ENCODE measurements at regions of chr19 and their contacts with region 1.

Region 1: DNA sequence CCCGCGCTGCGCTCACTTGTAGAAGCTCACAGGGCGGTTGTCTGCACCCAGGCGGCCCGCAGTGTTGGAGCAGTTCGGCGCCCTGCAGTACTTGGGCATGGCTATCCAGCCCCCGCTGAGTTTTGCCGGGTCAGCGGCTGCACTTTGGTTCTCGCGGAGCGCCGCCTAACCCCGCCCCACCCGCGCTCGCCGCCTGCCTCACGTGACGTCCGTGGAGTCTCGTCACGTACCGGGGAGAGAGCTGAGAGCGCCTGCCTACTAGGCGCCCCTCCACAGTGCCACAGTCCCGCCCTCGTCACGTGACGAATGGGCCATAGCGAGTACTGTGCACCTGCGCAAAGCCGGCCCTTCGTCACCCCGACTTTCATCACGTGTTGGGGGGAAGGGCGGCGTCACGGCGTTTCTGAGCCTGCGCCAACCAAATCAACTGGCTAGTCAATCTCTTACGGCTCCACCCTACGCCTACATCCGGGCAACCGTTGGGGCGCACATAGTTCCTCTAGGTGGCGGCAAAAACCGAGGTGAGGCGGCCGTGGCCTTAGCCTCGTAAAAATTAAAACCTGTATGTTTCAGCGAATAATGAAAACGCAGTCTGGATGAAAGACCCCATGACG is at the start of gene THAP8:
- DNase-seq: peak; percentile 94 to 99 (median 97)
- ATAC-seq: peak; percentile 90
- H3K4me3 ChIP-seq: peak within 1 kb of the TSS; percentile 55
- H3K27ac ChIP-seq: peak within 1 kb of the TSS; percentile 92
- H3K4me1 ChIP-seq: peaks cover 5 to 26% of the 10 kb centered on the region in 2 experiments; a peak in 3 of 5 replicates
- H3K27me3 ChIP-seq: no peaks in the 10 kb centered on the region
- CTCF ChIP-seq: peak; percentile 34 to 61 (median 61); a peak in 5 of 6 replicates
- EP300 ChIP-seq: peak; percentile 7; the same call in 1 of the 2 replicates
- POLR2A ChIP-seq: peak; percentile 79
- RAD21 ChIP-seq: no peak
- polyA plus RNA-seq, gene THAP8: 0.11 to 0.14 TPM

Region 2: GRCh38 chr19:35995048-35995993 is 58.9 kb before region 1 on chr19 and contains the start of gene SDHAF1:
- CTCF ChIA-PET with region 1: interaction called, 3 read pairs
- POLR2A ChIA-PET with region 1: interaction called, 3 read pairs
- in situ Hi-C with region 1: no loop called
- intact Hi-C with region 1: loop called (anchors 5 kb)
- DNase-seq: peak; percentile 95 to 98 (median 96)
- ATAC-seq: peak; percentile 93
- H3K4me3 ChIP-seq: peak within 1 kb of the TSS; percentile 59
- H3K27ac ChIP-seq: peak within 1 kb of the TSS; percentile 73
- H3K4me1 ChIP-seq: peaks cover 9 to 29% of the 10 kb centered on the region in 2 experiments; a peak in 4 of 5 replicates
- H3K27me3 ChIP-seq: no peaks in the 10 kb centered on the region
- CTCF ChIP-seq: peak in 2 of 3 experiments; percentile 3 to 14; a peak in 1 of 6 replicates
- EP300 ChIP-seq: no peak
- POLR2A ChIP-seq: peak; percentile 88
- RAD21 ChIP-seq: no peak
- polyA plus RNA-seq, gene SDHAF1: 0.42 to 1.1 TPM

Region 3: GRCh38 chr19:36014029-36014924 is 39.9 kb before region 1 on chr19 and contains the start of gene ALKBH6:
- CTCF ChIA-PET with region 1: no interaction called
- POLR2A ChIA-PET with region 1: interaction called, 5 read pairs
- in situ Hi-C with region 1: no loop called
- intact Hi-C with region 1: loop called (anchors 1 kb)
- DNase-seq: peak; percentile 98 to 100 (median 98)
- ATAC-seq: peak; percentile 99
- H3K4me3 ChIP-seq: peak within 1 kb of the TSS; percentile 87
- H3K27ac ChIP-seq: peak within 1 kb of the TSS; percentile 82
- H3K4me1 ChIP-seq: peaks cover 11 to 26% of the 10 kb centered on the region in 2 experiments; a peak in 4 of 5 replicates
- H3K27me3 ChIP-seq: no peaks in the 10 kb centered on the region
- CTCF ChIP-seq: no peak
- EP300 ChIP-seq: no peak
- POLR2A ChIP-seq: peak; percentile 89
- RAD21 ChIP-seq: no peak
- polyA plus RNA-seq, gene ALKBH6: 0.67 to 2.3 TPM